Psoas muscle (tissue), 8 donors: ENCODE measurements at regions of chr5 and their contacts with region 1.

Region 1: GRCh38 chr5:54517174-54518092 is at the start of gene SNX18:
- DNase-seq: peak; percentile 93 to 97
- ATAC-seq: peak; percentile 94 to 97 (median 96)
- H3K4me3 ChIP-seq: peak within 1 kb of the TSS; percentile 99
- H3K27ac ChIP-seq: peak within 1 kb of the TSS; percentile 95
- H3K4me1 ChIP-seq: peaks cover 26% of the 10 kb centered on the region
- H3K27me3 ChIP-seq: no peaks in the 10 kb centered on the region
- CTCF ChIP-seq: peak; percentile 99
- total RNA-seq, gene SNX18: 9.1 to 13.0 (median 10.7) TPM

Region 2: GRCh38 chr5:54758038-54758437 is 240.6 kb after region 1 on chr5:
- intact Hi-C with region 1: loop called in 1 of 2 experiments (anchors 5 kb)
- DNase-seq: no peak
- ATAC-seq: no peak
- H3K4me3 ChIP-seq: no peak overlapping the region
- H3K27ac ChIP-seq: no peak overlapping the region
- H3K4me1 ChIP-seq: no peaks in the 10 kb centered on the region
- H3K27me3 ChIP-seq: no peaks in the 10 kb centered on the region
- CTCF ChIP-seq: no peak

Region 3: GRCh38 chr5:54844905-54845566 is 327.6 kb after region 1 on chr5:
- intact Hi-C with region 1: loop called (anchors 1 to 2 kb)
- DNase-seq: no peak
- ATAC-seq: peak in 1 of 4 donors; percentile 55
- H3K4me3 ChIP-seq: peak overlapping the region; percentile 54
- H3K27ac ChIP-seq: no peak overlapping the region
- H3K4me1 ChIP-seq: peaks cover 5% of the 10 kb centered on the region
- H3K27me3 ChIP-seq: no peaks in the 10 kb centered on the region
- CTCF ChIP-seq: peak; percentile 73

Region 4: GRCh38 chr5:54867310-54867944 is 350.0 kb after region 1 on chr5:
- intact Hi-C with region 1: loop called (anchors 2 kb)
- DNase-seq: no peak
- ATAC-seq: peak in 3 of 4 donors; percentile 42 to 79 (median 63)
- H3K4me3 ChIP-seq: peak overlapping the region; percentile 43
- H3K27ac ChIP-seq: no peak overlapping the region
- H3K4me1 ChIP-seq: no peaks in the 10 kb centered on the region
- H3K27me3 ChIP-seq: no peaks in the 10 kb centered on the region
- CTCF ChIP-seq: peak; percentile 68

Region 5: DNA sequence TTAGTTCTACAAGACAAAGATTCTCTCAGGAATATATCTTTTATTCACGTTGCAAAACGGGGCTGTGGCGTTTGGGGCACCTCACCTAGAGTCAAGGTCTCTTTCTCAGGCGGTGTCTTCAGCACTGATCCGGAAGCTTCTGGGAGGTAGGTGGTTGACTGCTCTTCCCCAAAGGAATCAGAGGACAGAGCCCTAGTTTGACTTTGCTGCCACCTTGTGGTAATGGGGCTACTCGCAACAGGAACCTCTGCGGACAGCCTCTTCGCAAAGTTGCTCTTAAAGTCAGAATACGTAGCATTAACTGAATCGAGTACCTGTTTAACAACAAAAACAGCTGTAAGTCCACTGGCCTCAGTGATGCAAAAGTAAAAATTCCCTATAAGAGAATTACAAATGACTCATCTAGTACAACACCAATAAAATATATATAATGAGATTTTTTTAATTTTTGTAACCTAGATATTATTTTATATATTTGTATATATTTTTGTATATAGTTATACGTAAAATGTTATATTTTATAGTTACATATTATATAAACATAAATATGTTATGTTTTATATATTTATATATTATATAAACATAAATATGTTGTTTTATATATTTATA is 629.2 kb after region 1 on chr5:
- intact Hi-C with region 1: loop called in 1 of 2 experiments (anchors 10 kb)
- DNase-seq: peak; percentile 64 to 74
- ATAC-seq: peak; percentile 78 to 95 (median 84)
- H3K4me3 ChIP-seq: no peak overlapping the region
- H3K27ac ChIP-seq: no peak overlapping the region
- H3K4me1 ChIP-seq: no peaks in the 10 kb centered on the region
- H3K27me3 ChIP-seq: peaks cover 0 to 5% (median 4%) of the 10 kb centered on the region in 3 donors
- CTCF ChIP-seq: peak; percentile 89